Endothelial cell of umbilical vein (primary cell): ENCODE measurements at regions of chr1 and their contacts with region 1.

Region 1: DNA sequence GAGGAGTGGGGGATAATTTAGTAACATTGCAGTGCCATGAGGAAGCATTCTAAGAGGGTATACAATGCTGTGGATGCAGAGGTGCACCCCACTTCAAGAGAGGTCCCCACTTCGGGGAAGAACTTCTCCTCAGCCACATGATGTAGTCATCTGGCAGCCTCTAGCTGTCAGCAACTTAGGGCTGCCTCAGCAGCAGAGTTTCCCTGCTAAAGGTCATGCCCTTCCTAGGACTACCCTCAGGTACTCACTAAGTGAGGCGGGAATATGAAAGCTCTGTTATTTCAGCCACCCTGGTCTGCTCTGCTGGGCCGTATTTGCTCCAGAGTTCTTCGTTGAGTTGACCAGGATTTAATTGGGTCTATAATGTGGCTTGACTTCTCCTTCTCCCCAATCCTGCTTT is 41.9 kb upstream of the NGF start:
- DNase-seq: no peak
- H3K4me3 ChIP-seq: no peak overlapping the region
- H3K27ac ChIP-seq: no peak overlapping the region
- H3K4me1 ChIP-seq: no peaks in the 10 kb centered on the region
- H3K27me3 ChIP-seq: peaks cover 0 to 4% of the 10 kb centered on the region in 2 experiments
- CTCF ChIP-seq: no peak
- POLR2A ChIP-seq: no peak

Region 2: GRCh38 chr1:115258302-115258866 is 121.6 kb before region 1 on chr1:
- CTCF ChIA-PET with region 1: no interaction called
- POLR2A ChIA-PET with region 1: no interaction called
- dilution Hi-C with region 1: no loop called
- intact Hi-C with region 1: no loop called
- DNase-seq: no peak
- H3K4me3 ChIP-seq: no peak overlapping the region
- H3K27ac ChIP-seq: no peak overlapping the region
- H3K4me1 ChIP-seq: no peaks in the 10 kb centered on the region
- H3K27me3 ChIP-seq: no peaks in the 10 kb centered on the region
- CTCF ChIP-seq: no peak
- POLR2A ChIP-seq: no peak

Region 3: DNA sequence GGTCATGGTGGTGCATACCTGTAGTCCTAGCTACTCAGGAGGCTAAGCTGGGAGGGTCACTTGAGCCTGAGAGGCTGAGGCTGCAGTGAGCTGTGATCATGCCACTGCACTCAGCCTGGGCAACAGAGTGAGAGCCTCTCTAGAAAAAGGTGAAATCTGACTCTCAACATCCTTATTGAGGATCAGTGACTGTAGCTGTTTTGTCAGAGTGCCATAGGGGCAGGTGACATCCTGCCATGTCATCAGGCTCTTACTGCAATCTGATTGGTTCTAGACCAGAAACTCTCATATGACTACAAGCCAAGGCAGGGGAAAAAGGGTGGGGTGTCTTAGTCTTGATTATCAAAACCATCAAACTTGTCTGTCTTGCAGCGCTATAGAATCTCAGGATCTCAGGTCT is 20.9 kb after region 1 on chr1:
- CTCF ChIA-PET with region 1: no interaction called
- POLR2A ChIA-PET with region 1: no interaction called
- dilution Hi-C with region 1: no loop called
- intact Hi-C with region 1: no loop called
- DNase-seq: no peak
- H3K4me3 ChIP-seq: no peak overlapping the region
- H3K27ac ChIP-seq: no peak overlapping the region
- H3K4me1 ChIP-seq: no peaks in the 10 kb centered on the region
- H3K27me3 ChIP-seq: no peaks in the 10 kb centered on the region
- CTCF ChIP-seq: no peak
- POLR2A ChIP-seq: no peak

Region 4: GRCh38 chr1:115413208-115413607 is 33.3 kb after region 1 on chr1:
- CTCF ChIA-PET with region 1: no interaction called
- POLR2A ChIA-PET with region 1: no interaction called
- dilution Hi-C with region 1: no loop called
- intact Hi-C with region 1: no loop called
- DNase-seq: no peak
- H3K4me3 ChIP-seq: no peak overlapping the region
- H3K27ac ChIP-seq: no peak overlapping the region
- H3K4me1 ChIP-seq: no peaks in the 10 kb centered on the region
- H3K27me3 ChIP-seq: no peaks in the 10 kb centered on the region
- CTCF ChIP-seq: no peak
- POLR2A ChIP-seq: no peak

Region 5: GRCh38 chr1:115440733-115441132 is 60.8 kb after region 1 on chr1:
- CTCF ChIA-PET with region 1: no interaction called
- POLR2A ChIA-PET with region 1: no interaction called
- dilution Hi-C with region 1: no loop called
- intact Hi-C with region 1: loop called (anchors 10 kb)
- DNase-seq: no peak
- H3K4me3 ChIP-seq: no peak overlapping the region
- H3K27ac ChIP-seq: no peak overlapping the region
- H3K4me1 ChIP-seq: no peaks in the 10 kb centered on the region
- H3K27me3 ChIP-seq: no peaks in the 10 kb centered on the region
- CTCF ChIP-seq: no peak
- POLR2A ChIP-seq: no peak